Activated CD4-positive, alpha-beta memory T cell treated with anti-CD3 and anti-CD28 coated beads for 36 hours (primary cell): ENCODE measurements at regions of chr2 and their contacts with region 1.

Region 1: GRCh38 chr2:237474931-237475703 is 11.9 kb upstream of the MLPH start:
- DNase-seq: peak; percentile 79
- H3K4me3 Mint-ChIP-seq: peak overlapping the region; percentile 68
- H3K27ac Mint-ChIP-seq: peak overlapping the region; percentile 78
- H3K4me1 Mint-ChIP-seq: peaks cover 10% of the 10 kb centered on the region
- H3K27me3 Mint-ChIP-seq: peaks cover 18% of the 10 kb centered on the region

Region 2: DNA sequence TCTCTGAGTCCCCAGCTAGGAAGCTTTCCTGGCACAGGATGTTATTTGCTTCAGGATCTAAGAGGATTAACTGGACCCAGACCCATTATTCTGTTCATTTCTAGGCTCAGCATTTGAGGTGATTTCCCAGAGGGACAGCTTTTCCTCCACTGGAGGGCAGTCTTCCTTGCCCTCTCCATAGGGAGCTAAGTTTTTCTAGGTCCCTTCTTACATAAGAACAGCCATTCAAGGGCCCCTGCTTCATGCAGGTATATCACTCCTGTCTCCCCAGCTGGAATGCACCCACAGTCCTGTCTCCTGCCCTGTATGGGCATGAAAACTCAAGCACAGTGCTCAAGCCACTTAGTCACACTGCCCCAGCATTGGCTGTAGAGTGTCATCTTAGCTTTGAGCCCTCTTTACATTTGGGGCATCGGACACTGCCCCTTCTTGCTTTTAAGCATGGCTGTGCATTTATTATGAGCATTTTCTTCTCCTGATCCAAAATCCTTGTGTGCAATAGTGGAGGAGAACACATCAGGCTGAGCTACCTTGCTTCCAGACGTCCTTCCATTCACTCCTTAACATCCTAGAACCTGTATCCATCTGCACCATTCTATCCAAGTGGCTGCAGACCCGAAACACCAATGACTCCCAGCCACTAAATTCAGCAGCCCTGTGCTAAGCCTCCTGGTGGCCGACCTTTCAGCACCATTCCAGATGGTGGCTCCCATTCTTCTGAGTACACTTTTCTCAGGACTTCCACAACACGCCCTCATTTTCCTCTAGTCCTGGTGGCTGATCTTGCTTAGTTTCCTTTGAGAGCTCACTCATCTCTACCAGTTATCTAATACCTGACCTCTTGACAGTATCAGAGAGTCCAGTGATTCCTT is 309.5 kb before region 1 on chr2:
- CTCF ChIA-PET with region 1: interaction called, 12 read pairs
- POLR2A ChIA-PET with region 1: no interaction called
- intact Hi-C with region 1: no loop called
- DNase-seq: no peak
- H3K4me3 Mint-ChIP-seq: no peak overlapping the region
- H3K27ac Mint-ChIP-seq: no peak overlapping the region
- H3K4me1 Mint-ChIP-seq: no peaks in the 10 kb centered on the region
- H3K27me3 Mint-ChIP-seq: peaks cover 5% of the 10 kb centered on the region

Region 3: DNA sequence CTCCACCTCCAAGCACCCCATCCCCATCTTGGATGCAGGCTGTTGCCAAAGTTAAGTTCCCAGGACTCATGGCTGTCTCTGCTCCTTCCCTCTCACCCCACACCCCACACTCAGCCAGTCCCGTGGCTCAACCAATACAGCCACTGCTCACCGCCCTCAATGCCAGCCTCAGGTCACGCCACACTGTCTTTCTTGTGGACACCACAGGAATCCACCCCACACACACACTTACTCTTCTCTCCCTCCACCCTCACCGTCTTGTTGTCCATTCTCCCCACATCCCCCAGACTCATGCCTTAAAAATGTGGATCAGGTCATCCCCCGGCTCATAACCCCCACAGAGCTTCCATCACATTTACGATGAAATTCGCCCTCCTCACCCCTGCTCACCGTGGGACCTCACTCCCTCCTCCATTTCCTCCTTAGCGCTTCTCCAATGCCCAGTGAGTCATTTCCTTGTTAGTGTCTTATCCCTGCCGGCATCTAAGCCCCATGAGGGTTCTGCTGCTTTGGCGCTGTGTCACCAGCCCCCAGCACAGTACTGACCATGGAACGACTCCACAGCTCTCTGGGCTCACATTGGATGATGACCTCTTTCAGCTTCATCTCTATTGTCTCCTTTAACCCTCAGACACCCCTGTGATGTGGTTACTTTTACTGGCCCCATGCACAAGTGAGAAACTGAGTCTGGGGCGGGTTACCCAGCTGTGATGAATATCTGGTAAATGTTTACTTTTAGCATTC is 25.7 kb after region 1 on chr2:
- CTCF ChIA-PET with region 1: no interaction called
- POLR2A ChIA-PET with region 1: no interaction called
- intact Hi-C with region 1: no loop called
- DNase-seq: no peak
- H3K4me3 Mint-ChIP-seq: no peak overlapping the region
- H3K27ac Mint-ChIP-seq: no peak overlapping the region
- H3K4me1 Mint-ChIP-seq: no peaks in the 10 kb centered on the region
- H3K27me3 Mint-ChIP-seq: peaks cover 36% of the 10 kb centered on the region

Region 4: DNA sequence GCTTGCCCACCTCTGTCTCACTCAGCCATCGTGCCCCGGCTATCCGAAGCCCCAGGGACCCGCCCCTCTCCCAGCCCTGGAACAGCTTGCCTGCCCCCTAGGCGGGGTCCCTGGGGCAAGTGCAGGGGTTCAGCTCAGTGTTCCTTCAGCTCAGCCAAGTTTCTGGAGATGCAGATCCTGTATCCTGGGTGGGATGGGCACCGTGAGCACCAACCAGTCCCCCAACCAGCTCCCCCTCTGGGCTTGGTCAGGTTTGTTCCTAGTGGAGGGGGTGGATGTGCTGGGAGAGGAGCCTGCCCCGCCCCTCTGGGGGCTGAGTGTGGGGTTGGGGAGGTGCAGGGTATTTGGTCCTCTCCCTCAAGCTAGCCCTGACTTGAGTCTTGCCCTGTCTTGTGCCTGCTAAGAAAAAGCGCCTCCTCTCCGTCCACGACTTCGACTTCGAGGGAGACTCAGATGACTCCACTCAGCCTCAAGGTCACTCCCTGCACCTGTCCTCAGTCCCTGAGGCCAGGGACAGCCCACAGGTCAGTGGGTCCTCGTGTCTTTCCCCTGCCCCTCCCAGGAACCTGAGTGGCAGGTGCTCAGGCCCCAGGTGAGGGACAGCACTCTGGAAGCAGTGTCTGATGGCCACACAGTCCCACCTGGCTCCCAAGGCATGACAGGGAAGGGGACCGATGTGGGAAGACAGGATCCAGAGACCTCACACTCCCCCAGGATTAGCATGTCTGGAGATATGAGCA is 44.6 kb after region 1 on chr2:
- CTCF ChIA-PET with region 1: no interaction called
- POLR2A ChIA-PET with region 1: no interaction called
- intact Hi-C with region 1: no loop called
- DNase-seq: no peak
- H3K4me3 Mint-ChIP-seq: no peak overlapping the region
- H3K27ac Mint-ChIP-seq: no peak overlapping the region
- H3K4me1 Mint-ChIP-seq: no peaks in the 10 kb centered on the region
- H3K27me3 Mint-ChIP-seq: no peaks in the 10 kb centered on the region